ENCODE measurements at regions of chr19 and their contacts with region 1.

Region 1: GRCh38 chr19:45692187-45693105 is at the start of gene QPCTL:
- DNase-seq: peak; percentile 91 to 99 (median 94)
- ATAC-seq: peak; percentile 85
- H3K4me3 ChIP-seq: peak within 1 kb of the TSS; percentile 74 to 95
- H3K4me3 Mint-ChIP-seq: peak within 1 kb of the TSS; percentile 95
- H3K27ac ChIP-seq: peak within 1 kb of the TSS; percentile 90 to 91
- H3K27ac Mint-ChIP-seq: peak within 1 kb of the TSS; percentile 94
- H3K4me1 ChIP-seq: peaks cover 17% of the 10 kb centered on the region
- H3K4me1 Mint-ChIP-seq: peaks cover 27% of the 10 kb centered on the region
- H3K27me3 ChIP-seq: no peaks in the 10 kb centered on the region
- H3K27me3 Mint-ChIP-seq: no peaks in the 10 kb centered on the region
- CTCF ChIP-seq: no peak
- total RNA-seq, gene QPCTL: 7.0 to 7.5 TPM

Region 2: DNA sequence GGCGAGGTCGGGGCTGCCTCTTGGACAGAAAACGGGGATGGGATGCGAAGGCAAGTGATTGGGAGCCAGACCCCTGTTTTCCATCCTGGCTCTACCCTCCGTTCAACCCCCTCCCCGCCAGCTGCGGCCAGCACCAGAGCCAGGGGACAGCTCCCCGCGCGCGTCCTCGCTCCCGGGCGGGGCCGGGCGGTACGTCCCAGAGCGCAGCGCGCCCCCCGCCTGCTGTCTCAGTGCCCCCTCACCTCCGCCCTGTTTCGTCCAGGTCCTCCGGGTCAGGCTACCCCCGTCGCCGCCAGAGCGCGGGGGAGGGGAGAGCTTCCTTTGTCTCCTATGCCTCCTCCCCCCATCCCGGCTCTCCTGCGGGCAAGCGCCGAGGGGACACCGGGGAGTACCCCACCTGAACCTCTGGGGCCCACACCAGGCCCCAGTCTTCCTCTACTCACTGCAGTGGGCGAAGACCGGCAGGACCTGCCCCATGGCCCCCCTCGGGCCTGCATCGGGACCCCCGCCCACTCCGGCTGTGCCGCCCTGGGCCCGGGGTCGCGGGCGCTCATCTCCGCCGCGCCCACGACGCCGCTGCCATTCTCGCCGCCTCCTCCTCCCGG is 196.0 kb before region 1 on chr19:
- CTCF ChIA-PET with region 1: interaction called, 3 read pairs
- POLR2A ChIA-PET with region 1: no interaction called
- intact Hi-C with region 1: loop called in 1 of 2 experiments (anchors 5 kb)
- DNase-seq: peak in 6 of 9 experiments; percentile 37 to 68 (median 58)
- ATAC-seq: peak; percentile 16
- H3K4me3 ChIP-seq: peak overlapping the region; percentile 57 to 75
- H3K4me3 Mint-ChIP-seq: peak overlapping the region; percentile 74
- H3K27ac ChIP-seq: no peak overlapping the region
- H3K27ac Mint-ChIP-seq: no peak overlapping the region
- H3K4me1 ChIP-seq: peaks cover 45% of the 10 kb centered on the region
- H3K4me1 Mint-ChIP-seq: peaks cover 37% of the 10 kb centered on the region
- H3K27me3 ChIP-seq: peaks cover 0 to 4% of the 10 kb centered on the region in 2 experiments
- H3K27me3 Mint-ChIP-seq: peaks cover 21% of the 10 kb centered on the region
- CTCF ChIP-seq: no peak

Region 3: GRCh38 chr19:45584332-45585157 is 107.9 kb before region 1 on chr19 and contains the start of gene OPA3:
- CTCF ChIA-PET with region 1: no interaction called
- POLR2A ChIA-PET with region 1: interaction called, 6 read pairs
- intact Hi-C with region 1: loop called (anchors 1 to 2 kb)
- DNase-seq: peak; percentile 97 to 100 (median 99)
- ATAC-seq: peak; percentile 86
- H3K4me3 ChIP-seq: peak within 1 kb of the TSS; percentile 80 to 86
- H3K4me3 Mint-ChIP-seq: peak within 1 kb of the TSS; percentile 96
- H3K27ac ChIP-seq: peak within 1 kb of the TSS; percentile 95 to 99
- H3K27ac Mint-ChIP-seq: peak within 1 kb of the TSS; percentile 99
- H3K4me1 ChIP-seq: peaks cover 6% of the 10 kb centered on the region
- H3K4me1 Mint-ChIP-seq: peaks cover 19% of the 10 kb centered on the region
- H3K27me3 ChIP-seq: no peaks in the 10 kb centered on the region
- H3K27me3 Mint-ChIP-seq: peaks cover 7% of the 10 kb centered on the region
- CTCF ChIP-seq: no peak
- total RNA-seq, gene OPA3: 5.6 to 5.7 TPM

Region 4: GRCh38 chr19:45681391-45682015 is 10.9 kb before region 1 on chr19:
- CTCF ChIA-PET with region 1: interaction called, 97 read pairs
- POLR2A ChIA-PET with region 1: interaction called, 21 read pairs
- intact Hi-C with region 1: loop called (anchors 1 to 2 kb)
- DNase-seq: peak; percentile 74 to 94 (median 85)
- ATAC-seq: peak; percentile 76
- H3K4me3 ChIP-seq: peak overlapping the region; percentile 34 to 50
- H3K4me3 Mint-ChIP-seq: peak overlapping the region; percentile 73
- H3K27ac ChIP-seq: no peak overlapping the region
- H3K27ac Mint-ChIP-seq: peak overlapping the region; percentile 49
- H3K4me1 ChIP-seq: peaks cover 17% of the 10 kb centered on the region
- H3K4me1 Mint-ChIP-seq: peaks cover 20% of the 10 kb centered on the region
- H3K27me3 ChIP-seq: peaks cover 0 to 4% of the 10 kb centered on the region in 2 experiments
- H3K27me3 Mint-ChIP-seq: no peaks in the 10 kb centered on the region
- CTCF ChIP-seq: peak; percentile 97

Region 5: GRCh38 chr19:45717166-45717982 is 24.9 kb after region 1 on chr19:
- CTCF ChIA-PET with region 1: interaction called, 50 read pairs
- POLR2A ChIA-PET with region 1: interaction called, 26 read pairs
- intact Hi-C with region 1: loop called (anchors 1 kb)
- DNase-seq: peak; percentile 96 to 99 (median 97)
- ATAC-seq: peak; percentile 95
- H3K4me3 ChIP-seq: peak overlapping the region; percentile 60 to 85
- H3K4me3 Mint-ChIP-seq: peak overlapping the region; percentile 97
- H3K27ac ChIP-seq: peak overlapping the region; percentile 73 to 95
- H3K27ac Mint-ChIP-seq: peak overlapping the region; percentile 97
- H3K4me1 ChIP-seq: peaks cover 21% of the 10 kb centered on the region
- H3K4me1 Mint-ChIP-seq: peaks cover 44% of the 10 kb centered on the region
- H3K27me3 ChIP-seq: no peaks in the 10 kb centered on the region
- H3K27me3 Mint-ChIP-seq: no peaks in the 10 kb centered on the region
- CTCF ChIP-seq: no peak

Region 6: GRCh38 chr19:45792470-45793177 is 100.2 kb after region 1 on chr19 and contains the start of gene DMWD:
- CTCF ChIA-PET with region 1: no interaction called
- POLR2A ChIA-PET with region 1: interaction called, 3 read pairs
- intact Hi-C with region 1: loop called in 1 of 2 experiments (anchors 1 kb)
- DNase-seq: peak; percentile 99 to 100 (median 99)
- ATAC-seq: peak; percentile 96
- H3K4me3 ChIP-seq: peak within 1 kb of the TSS; percentile 55 to 62
- H3K4me3 Mint-ChIP-seq: peak within 1 kb of the TSS; percentile 90
- H3K27ac ChIP-seq: peak within 1 kb of the TSS; percentile 37 to 63
- H3K27ac Mint-ChIP-seq: peak within 1 kb of the TSS; percentile 75
- H3K4me1 ChIP-seq: peaks cover 28% of the 10 kb centered on the region
- H3K4me1 Mint-ChIP-seq: peaks cover 37% of the 10 kb centered on the region
- H3K27me3 ChIP-seq: peaks cover 3 to 6% of the 10 kb centered on the region in 2 experiments
- H3K27me3 Mint-ChIP-seq: peaks cover 18% of the 10 kb centered on the region
- CTCF ChIP-seq: no peak
- total RNA-seq, gene DMWD: 23.8 to 25.5 TPM

Region 7: GRCh38 chr19:46076951-46077816 is 384.7 kb after region 1 on chr19:
- CTCF ChIA-PET with region 1: no interaction called
- POLR2A ChIA-PET with region 1: no interaction called
- intact Hi-C with region 1: no loop called
- DNase-seq: peak in 2 of 9 experiments; percentile 16 to 44
- ATAC-seq: no peak
- H3K4me3 ChIP-seq: no peak overlapping the region
- H3K4me3 Mint-ChIP-seq: no peak overlapping the region
- H3K27ac ChIP-seq: no peak overlapping the region
- H3K27ac Mint-ChIP-seq: no peak overlapping the region
- H3K4me1 ChIP-seq: peaks cover 11% of the 10 kb centered on the region
- H3K4me1 Mint-ChIP-seq: peaks cover 7% of the 10 kb centered on the region
- H3K27me3 ChIP-seq: peaks cover 7 to 30% of the 10 kb centered on the region in 2 experiments
- H3K27me3 Mint-ChIP-seq: peaks cover 64% of the 10 kb centered on the region
- CTCF ChIP-seq: no peak

Region 8: DNA sequence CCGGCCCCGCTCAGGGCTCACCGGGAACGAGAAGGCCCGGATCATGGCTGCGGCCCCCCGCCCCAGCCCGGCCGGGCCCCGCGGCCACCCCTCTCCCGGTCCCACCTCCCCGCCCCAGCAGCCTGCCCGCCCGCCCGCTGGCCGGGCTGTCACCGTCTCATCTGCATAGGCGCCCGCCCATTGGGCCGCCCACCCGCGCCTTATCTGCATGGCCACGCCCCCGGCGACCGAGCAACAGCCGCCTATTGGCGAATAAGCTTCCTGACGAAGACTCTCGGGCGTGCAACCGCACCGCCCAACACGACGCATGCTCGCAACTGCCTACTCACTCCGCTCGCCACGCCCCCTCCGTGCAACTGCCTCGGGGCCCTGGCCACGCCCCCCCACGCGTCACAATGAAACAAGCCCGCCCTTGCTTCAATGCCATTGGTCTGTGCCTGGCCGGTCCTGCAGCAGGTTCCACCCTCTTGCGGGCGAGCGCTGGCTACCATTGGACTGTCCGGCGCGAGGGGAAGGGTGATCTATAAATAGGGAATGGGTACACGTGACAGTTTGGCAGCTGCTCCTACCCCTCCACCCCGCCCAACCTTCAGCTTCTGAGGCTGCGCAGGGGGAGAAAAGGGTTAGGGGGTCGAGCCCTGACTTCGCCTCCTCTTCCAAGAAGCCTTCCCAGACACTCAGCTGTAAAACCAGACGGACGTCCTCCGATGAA is 968.7 kb after region 1 on chr19 and contains the start of gene DACT3:
- CTCF ChIA-PET with region 1: no interaction called
- POLR2A ChIA-PET with region 1: no interaction called
- intact Hi-C with region 1: loop called in 1 of 2 experiments (anchors 2 kb)
- DNase-seq: peak; percentile 99 to 100 (median 100)
- ATAC-seq: peak; percentile 89
- H3K4me3 ChIP-seq: peak within 1 kb of the TSS; percentile 54 to 62
- H3K4me3 Mint-ChIP-seq: peak within 1 kb of the TSS; percentile 82
- H3K27ac ChIP-seq: peak within 1 kb of the TSS; percentile 43 to 50
- H3K27ac Mint-ChIP-seq: peak within 1 kb of the TSS; percentile 87
- H3K4me1 ChIP-seq: peaks cover 26% of the 10 kb centered on the region
- H3K4me1 Mint-ChIP-seq: peaks cover 27% of the 10 kb centered on the region
- H3K27me3 ChIP-seq: peaks cover 7 to 21% of the 10 kb centered on the region in 2 experiments
- H3K27me3 Mint-ChIP-seq: peaks cover 17% of the 10 kb centered on the region
- CTCF ChIP-seq: no peak
- total RNA-seq, gene DACT3: not detected